Gastrocnemius medialis (tissue), 4 donors: ENCODE measurements at regions of chr4 and their contacts with region 1.

Region 1: GRCh38 chr4:17810260-17811077 is at the starts of genes DCAF16 and NCAPG:
- DNase-seq: peak; percentile 98 to 99
- ATAC-seq: peak; percentile 99 to 100
- H3K4me3 ChIP-seq: peak within 1 kb of the TSS; percentile 82 to 95 (median 88)
- H3K27ac ChIP-seq: peak within 1 kb of the TSS; percentile 94 to 99 (median 97)
- H3K4me1 ChIP-seq: peaks cover 43 to 48% of the 10 kb centered on the region in 2 donors
- H3K27me3 ChIP-seq: no peaks in the 10 kb centered on the region
- CTCF ChIP-seq: no peak
- POLR2A ChIP-seq: peak; percentile 95
- total RNA-seq, gene DCAF16: 5.8 to 12.3 (median 8.2) TPM
- total RNA-seq, gene NCAPG: 0.25 to 0.49 (median 0.33) TPM in 3 of 4 donors, not detected in the other

Region 2: DNA sequence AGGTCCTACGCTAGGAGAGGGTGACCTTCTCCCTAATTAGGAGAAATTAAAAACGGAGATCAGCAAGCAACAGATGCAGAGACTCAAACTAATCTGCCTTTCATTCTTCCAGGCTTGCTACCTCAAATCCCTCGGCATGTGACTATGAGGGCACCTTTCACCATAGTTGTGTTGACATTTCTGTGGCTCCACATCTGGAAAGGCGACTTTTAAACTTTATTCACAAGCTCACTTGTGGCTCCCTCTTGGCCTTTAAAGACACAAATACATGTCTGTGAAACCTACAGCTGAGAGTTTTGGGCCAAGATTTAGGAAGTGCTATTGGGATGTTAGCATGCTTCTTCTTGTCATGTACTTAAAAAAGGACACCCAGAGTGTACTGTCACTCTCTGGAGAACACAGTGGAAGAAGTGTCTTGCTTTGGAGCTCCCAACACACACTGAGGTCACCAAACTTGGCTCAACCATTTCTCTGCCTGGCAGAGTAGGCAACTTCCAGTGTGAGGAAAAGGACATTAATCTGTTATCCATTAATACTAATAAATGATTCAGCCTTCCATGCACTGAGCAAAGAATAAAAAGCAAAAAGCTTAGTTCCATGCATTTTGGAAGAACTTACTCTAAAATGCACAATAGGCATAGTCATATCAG is 972.1 kb before region 1 on chr4:
- in situ Hi-C with region 1: no loop called
- intact Hi-C with region 1: no loop called
- DNase-seq: no peak
- ATAC-seq: no peak
- H3K4me3 ChIP-seq: no peak overlapping the region
- H3K27ac ChIP-seq: no peak overlapping the region
- H3K4me1 ChIP-seq: no peaks in the 10 kb centered on the region
- H3K27me3 ChIP-seq: no peaks in the 10 kb centered on the region
- CTCF ChIP-seq: no peak
- POLR2A ChIP-seq: no peak

Region 3: GRCh38 chr4:17544205-17544604 is 266.3 kb before region 1 on chr4:
- in situ Hi-C with region 1: loop called in 2 of 4 experiments (anchors 5 to 10 kb)
- intact Hi-C with region 1: loop called (anchors 1 kb)
- DNase-seq: no peak
- ATAC-seq: no peak
- H3K4me3 ChIP-seq: no peak overlapping the region
- H3K27ac ChIP-seq: no peak overlapping the region
- H3K4me1 ChIP-seq: no peaks in the 10 kb centered on the region
- H3K27me3 ChIP-seq: no peaks in the 10 kb centered on the region
- CTCF ChIP-seq: no peak
- POLR2A ChIP-seq: no peak

Region 4: GRCh38 chr4:17576932-17577665 is 233.4 kb before region 1 on chr4 and contains the start of gene LAP3:
- in situ Hi-C with region 1: loop called in 3 of 4 experiments (anchors 10 to 25 kb)
- intact Hi-C with region 1: loop called (anchors 1 kb)
- DNase-seq: peak; percentile 94 to 97
- ATAC-seq: peak; percentile 90 to 93
- H3K4me3 ChIP-seq: peak within 1 kb of the TSS; percentile 81 to 93 (median 87)
- H3K27ac ChIP-seq: peak within 1 kb of the TSS; percentile 86 to 95 (median 90)
- H3K4me1 ChIP-seq: peaks cover 16 to 28% of the 10 kb centered on the region in 2 donors
- H3K27me3 ChIP-seq: no peaks in the 10 kb centered on the region
- CTCF ChIP-seq: no peak
- POLR2A ChIP-seq: peak; percentile 80 to 90
- total RNA-seq, gene LAP3: 63.7 to 85.2 (median 76.5) TPM

Region 5: DNA sequence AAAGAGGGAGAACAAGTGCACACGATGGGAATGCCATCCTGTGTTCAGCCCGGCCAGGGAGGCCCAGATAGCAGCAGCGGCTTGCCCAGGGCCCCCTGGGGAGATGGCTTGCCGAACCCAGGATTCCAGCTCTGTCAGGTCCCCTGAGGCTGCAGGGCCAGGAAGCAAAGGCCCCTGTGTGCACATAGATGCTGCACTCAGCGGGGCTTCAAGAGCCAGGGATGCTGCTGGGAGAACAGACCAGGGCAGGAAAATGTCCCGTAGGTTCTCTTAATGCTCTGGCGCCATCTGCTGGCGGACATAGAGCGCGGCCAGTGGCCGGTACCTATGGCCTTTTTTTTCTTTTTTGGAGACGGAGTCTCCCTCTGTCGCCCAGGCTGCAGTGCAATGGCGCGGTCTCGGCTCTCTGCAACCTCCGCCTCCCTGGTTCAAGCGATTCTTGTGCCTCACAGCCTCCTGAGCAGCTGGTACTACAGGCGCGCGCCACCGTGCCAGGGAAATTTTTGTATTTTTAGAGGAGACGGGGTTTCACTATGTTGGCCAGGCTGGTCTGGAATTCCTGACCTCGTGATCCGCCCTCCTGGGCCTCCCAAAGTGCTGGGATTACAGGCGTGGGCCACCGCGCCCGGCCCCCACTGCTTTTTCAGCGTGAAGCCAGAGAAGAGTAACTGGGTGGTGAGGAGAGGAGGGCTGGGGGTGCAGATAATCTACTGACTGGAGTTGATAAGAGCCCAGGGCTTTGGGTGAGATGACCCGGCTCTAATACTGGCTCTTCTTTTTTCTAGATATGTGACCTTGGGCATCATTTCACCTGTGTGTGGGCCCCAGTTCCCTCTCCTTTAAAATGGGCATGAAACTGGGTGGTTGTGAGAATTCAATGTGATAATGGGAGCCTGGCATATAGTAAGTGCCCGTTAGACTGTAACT is 173.5 kb before region 1 on chr4:
- in situ Hi-C with region 1: no loop called
- intact Hi-C with region 1: loop called (anchors 5 kb)
- DNase-seq: peak; percentile 49 to 71
- ATAC-seq: peak; percentile 76 to 82
- H3K4me3 ChIP-seq: no peak overlapping the region
- H3K27ac ChIP-seq: peak overlapping the region in 2 of 4 donors; percentile 28 to 43
- H3K4me1 ChIP-seq: peaks cover 0 to 5% of the 10 kb centered on the region in 2 donors
- H3K27me3 ChIP-seq: no peaks in the 10 kb centered on the region
- CTCF ChIP-seq: peak; percentile 84 to 96 (median 92)
- POLR2A ChIP-seq: peak in 1 of 2 donors; percentile 12

Region 6: GRCh38 chr4:18021722-18022571 is 211.5 kb after region 1 on chr4 and contains the start of gene LCORL:
- in situ Hi-C with region 1: loop called in 3 of 4 experiments (anchors 10 to 25 kb)
- intact Hi-C with region 1: loop called (anchors 1 kb)
- DNase-seq: peak; percentile 91 to 95
- ATAC-seq: peak; percentile 92
- H3K4me3 ChIP-seq: peak within 1 kb of the TSS; percentile 70 to 84 (median 78)
- H3K27ac ChIP-seq: peak within 1 kb of the TSS; percentile 88 to 97 (median 96)
- H3K4me1 ChIP-seq: peaks cover 13 to 24% of the 10 kb centered on the region in 2 donors
- H3K27me3 ChIP-seq: no peaks in the 10 kb centered on the region
- CTCF ChIP-seq: peak in 2 of 5 experiments; percentile 33 to 38
- POLR2A ChIP-seq: peak; percentile 97
- total RNA-seq, gene LCORL: 12.8 to 34.7 (median 26.1) TPM